MCF 10A (cell line): ENCODE measurements at regions of chr1 and their contacts with region 1.

Region 1: DNA sequence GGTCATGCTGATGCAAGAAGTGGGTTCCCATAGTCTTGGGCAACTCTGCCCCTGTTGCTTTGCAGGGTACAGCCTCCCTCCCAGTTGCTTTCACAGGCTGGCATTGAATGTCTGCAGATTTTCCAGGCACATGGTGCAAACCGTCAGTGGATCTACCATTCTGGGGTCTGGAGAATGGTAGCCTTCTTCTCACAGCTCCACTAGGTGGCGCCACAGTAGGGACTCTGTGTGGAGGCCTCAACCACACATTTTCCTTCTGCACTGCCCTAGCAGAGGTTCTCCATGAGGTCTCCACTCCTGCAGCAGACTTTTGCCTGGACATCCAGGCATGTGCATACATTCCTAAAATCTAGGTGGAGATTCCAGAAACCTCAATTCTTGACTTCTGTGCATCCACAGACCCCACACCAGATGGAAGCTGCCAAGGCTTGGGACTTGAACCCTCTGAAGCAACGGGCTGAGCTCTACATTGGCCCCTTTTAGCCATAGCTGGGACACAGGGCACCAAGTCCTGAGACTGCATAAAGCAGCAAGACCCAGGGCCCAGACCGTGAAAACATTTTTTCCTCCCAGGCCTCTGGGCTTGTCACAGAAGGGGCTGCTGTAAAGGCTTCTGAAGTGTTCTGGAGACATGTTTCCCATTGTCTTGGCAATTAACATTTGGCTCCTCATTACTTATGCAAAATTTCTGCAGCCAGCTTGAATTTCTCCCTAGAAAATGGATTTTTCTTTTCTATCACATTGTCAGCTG is 466.2 kb upstream of the PBX1 start:
- DNase-seq: no peak
- H3K4me3 Mint-ChIP-seq: no peak overlapping the region
- H3K27ac Mint-ChIP-seq: no peak overlapping the region
- H3K4me1 Mint-ChIP-seq: no peaks in the 10 kb centered on the region
- H3K27me3 Mint-ChIP-seq: no peaks in the 10 kb centered on the region
- CTCF ChIP-seq: no peak

Region 2: DNA sequence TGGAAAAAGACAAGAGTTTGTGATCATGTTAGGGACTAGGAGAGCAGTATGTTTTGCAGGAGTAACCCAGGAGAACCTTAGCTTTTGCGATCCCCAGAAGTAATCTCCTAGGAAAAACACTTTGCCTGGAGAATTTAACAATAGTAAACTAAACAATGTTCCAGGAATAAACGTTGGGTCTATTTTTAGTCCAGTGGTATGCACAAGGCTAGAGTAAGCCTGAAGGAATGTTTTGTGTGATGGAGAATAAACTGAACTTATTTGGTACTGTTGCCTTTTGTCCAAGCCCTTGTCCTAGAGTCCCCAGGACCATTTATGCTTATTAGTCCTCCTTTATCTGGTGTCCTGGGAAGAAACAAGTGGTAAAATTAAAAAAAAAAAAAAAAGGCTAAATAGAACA is 861.4 kb before region 1 on chr1:
- CTCF ChIA-PET with region 1: no interaction called
- POLR2A ChIA-PET with region 1: no interaction called
- intact Hi-C with region 1: no loop called
- DNase-seq: no peak
- H3K4me3 Mint-ChIP-seq: no peak overlapping the region
- H3K27ac Mint-ChIP-seq: no peak overlapping the region
- H3K4me1 Mint-ChIP-seq: no peaks in the 10 kb centered on the region
- H3K27me3 Mint-ChIP-seq: no peaks in the 10 kb centered on the region
- CTCF ChIP-seq: no peak

Region 3: DNA sequence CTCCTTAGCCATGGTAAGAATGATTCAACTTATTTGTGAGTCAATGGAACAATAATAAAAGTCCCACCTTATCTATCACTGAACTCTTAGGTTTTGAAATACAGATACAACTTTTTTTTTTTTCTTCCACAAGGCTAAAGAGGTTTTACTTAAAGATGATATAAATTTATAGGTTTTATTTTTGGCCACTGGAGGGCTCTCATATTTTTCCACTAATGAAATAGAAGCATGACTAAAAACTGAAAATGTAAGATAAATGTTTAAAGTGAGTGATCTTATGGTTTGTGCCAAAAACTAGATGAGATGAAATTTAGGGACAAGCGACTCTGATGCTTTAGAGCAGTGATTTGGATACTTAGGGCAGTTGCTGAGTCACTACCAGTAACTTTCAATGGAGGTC is 272.0 kb before region 1 on chr1:
- CTCF ChIA-PET with region 1: no interaction called
- POLR2A ChIA-PET with region 1: no interaction called
- intact Hi-C with region 1: loop called (anchors 10 kb)
- DNase-seq: peak; percentile 25
- H3K4me3 Mint-ChIP-seq: no peak overlapping the region
- H3K27ac Mint-ChIP-seq: no peak overlapping the region
- H3K4me1 Mint-ChIP-seq: peaks cover 8% of the 10 kb centered on the region
- H3K27me3 Mint-ChIP-seq: no peaks in the 10 kb centered on the region
- CTCF ChIP-seq: peak; percentile 41

Region 4: GRCh38 chr1:164051782-164052181 is 41.0 kb before region 1 on chr1:
- CTCF ChIA-PET with region 1: no interaction called
- POLR2A ChIA-PET with region 1: no interaction called
- intact Hi-C with region 1: no loop called
- DNase-seq: peak; percentile 23
- H3K4me3 Mint-ChIP-seq: no peak overlapping the region
- H3K27ac Mint-ChIP-seq: no peak overlapping the region
- H3K4me1 Mint-ChIP-seq: no peaks in the 10 kb centered on the region
- H3K27me3 Mint-ChIP-seq: no peaks in the 10 kb centered on the region
- CTCF ChIP-seq: no peak

Region 5: DNA sequence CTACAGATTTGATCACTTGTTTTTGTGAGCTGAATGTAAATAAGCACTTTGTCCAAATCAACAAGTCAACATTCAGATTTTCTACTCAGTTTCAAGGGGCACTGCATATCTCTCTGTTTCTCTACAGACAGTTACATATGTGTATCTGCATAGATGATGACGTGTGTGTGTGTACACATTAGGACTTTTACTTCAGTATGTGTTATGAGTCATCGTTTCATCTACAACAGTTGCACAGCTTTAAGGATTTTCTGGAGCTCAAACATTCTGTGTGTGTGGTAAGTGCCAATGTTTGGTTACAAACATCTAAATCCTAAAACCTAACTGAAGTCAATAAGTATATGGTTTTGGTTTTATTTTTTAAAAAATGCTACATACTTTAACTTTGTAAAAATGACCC is 28.3 kb before region 1 on chr1:
- CTCF ChIA-PET with region 1: no interaction called
- POLR2A ChIA-PET with region 1: no interaction called
- intact Hi-C with region 1: no loop called
- DNase-seq: peak; percentile 52
- H3K4me3 Mint-ChIP-seq: no peak overlapping the region
- H3K27ac Mint-ChIP-seq: no peak overlapping the region
- H3K4me1 Mint-ChIP-seq: no peaks in the 10 kb centered on the region
- H3K27me3 Mint-ChIP-seq: no peaks in the 10 kb centered on the region
- CTCF ChIP-seq: no peak